Mammary epithelial cell (primary cell): ENCODE measurements at regions of chr11 and their contacts with region 1.

Region 1: GRCh38 chr11:64846998-64847666 is 2.7 kb upstream of the CDC42BPG start:
- DNase-seq: peak; percentile 79
- H3K4me3 ChIP-seq: no peak overlapping the region
- H3K27ac ChIP-seq: no peak overlapping the region
- H3K4me1 ChIP-seq: peaks cover 50% of the 10 kb centered on the region
- H3K27me3 ChIP-seq: no peaks in the 10 kb centered on the region
- CTCF ChIP-seq: peak; percentile 73 to 95

Region 2: DNA sequence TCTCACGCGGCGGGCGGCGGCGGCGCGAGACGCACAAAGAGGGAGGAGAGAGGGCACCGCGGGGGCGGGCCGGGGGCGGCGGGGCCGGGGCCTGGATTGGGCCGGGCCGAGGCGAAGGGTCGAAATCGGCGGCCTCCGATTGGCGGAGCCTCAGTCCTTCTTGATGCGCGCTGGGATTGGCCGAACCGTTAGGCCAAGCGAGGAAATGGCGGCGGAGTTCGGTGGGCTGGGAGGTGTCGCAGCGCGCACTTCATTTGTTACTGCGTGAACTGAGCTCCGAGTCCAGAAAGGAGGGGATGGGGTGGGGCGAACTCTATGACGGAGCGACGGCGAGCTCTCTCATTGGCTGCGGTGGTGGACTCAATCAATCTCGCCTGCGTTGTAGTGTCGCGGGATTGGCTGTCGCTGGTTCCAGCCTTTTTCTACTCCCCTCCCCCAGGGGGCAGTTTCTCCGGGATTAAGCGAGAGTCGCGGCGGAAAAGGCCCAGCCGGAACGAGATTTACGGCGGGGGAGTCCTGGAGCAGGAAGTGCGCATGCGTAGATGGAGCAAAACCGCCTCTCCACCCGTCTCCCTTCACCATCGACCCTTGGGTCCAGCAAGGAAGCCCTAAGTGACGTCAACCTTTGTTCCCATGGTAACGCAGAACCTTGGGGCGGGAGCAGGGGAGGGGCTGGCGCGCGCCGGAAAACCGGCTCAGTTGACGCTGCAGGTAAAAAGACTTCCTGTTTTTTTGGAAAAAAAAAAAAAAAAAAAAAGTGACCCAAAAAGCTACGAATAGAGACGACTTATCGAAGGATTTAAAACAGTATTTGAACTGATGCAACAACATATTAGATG is 68.4 kb before region 1 on chr11 and contains the start of gene SF1:
- CTCF ChIA-PET with region 1: interaction called, 5 read pairs
- dilution Hi-C with region 1: no loop called
- in situ Hi-C with region 1: no loop called
- intact Hi-C with region 1: loop called (anchors 2 kb)
- DNase-seq: peak; percentile 100
- H3K4me3 ChIP-seq: peak within 1 kb of the TSS; percentile 84 to 90 (median 86)
- H3K27ac ChIP-seq: peak within 1 kb of the TSS; percentile 96
- H3K4me1 ChIP-seq: peaks cover 22% of the 10 kb centered on the region
- H3K27me3 ChIP-seq: no peaks in the 10 kb centered on the region
- CTCF ChIP-seq: no peak
- total RNA-seq, gene SF1: 115 to 294 TPM

Region 3: GRCh38 chr11:64810271-64810890 is 36.8 kb before region 1 on chr11 and contains the start of gene MEN1:
- CTCF ChIA-PET with region 1: no interaction called
- dilution Hi-C with region 1: no loop called
- in situ Hi-C with region 1: no loop called
- intact Hi-C with region 1: loop called (anchors 2 kb)
- DNase-seq: peak; percentile 94
- H3K4me3 ChIP-seq: peak within 1 kb of the TSS; percentile 85 to 99 (median 89)
- H3K27ac ChIP-seq: peak within 1 kb of the TSS; percentile 31
- H3K4me1 ChIP-seq: peaks cover 6% of the 10 kb centered on the region
- H3K27me3 ChIP-seq: no peaks in the 10 kb centered on the region
- CTCF ChIP-seq: no peak
- total RNA-seq, gene MEN1: 20.7 to 35.7 TPM

Region 4: GRCh38 chr11:64887757-64888405 is 40.7 kb after region 1 on chr11:
- CTCF ChIA-PET with region 1: interaction called, 3 read pairs
- dilution Hi-C with region 1: loop called (anchors 5 kb)
- in situ Hi-C with region 1: loop called (anchors 5 kb)
- intact Hi-C with region 1: loop called (anchors 1 kb)
- DNase-seq: peak; percentile 49
- H3K4me3 ChIP-seq: peak overlapping the region in 1 of 3 experiments; percentile 19
- H3K27ac ChIP-seq: no peak overlapping the region
- H3K4me1 ChIP-seq: peaks cover 8% of the 10 kb centered on the region
- H3K27me3 ChIP-seq: no peaks in the 10 kb centered on the region
- CTCF ChIP-seq: peak; percentile 61 to 94

Region 5: GRCh38 chr11:64935359-64936081 is 88.4 kb after region 1 on chr11 and contains the start of gene GPHA2:
- CTCF ChIA-PET with region 1: no interaction called
- dilution Hi-C with region 1: loop called (anchors 5 kb)
- in situ Hi-C with region 1: no loop called
- intact Hi-C with region 1: no loop called
- DNase-seq: no peak
- H3K4me3 ChIP-seq: no peak within 1 kb of the TSS
- H3K27ac ChIP-seq: no peak within 1 kb of the TSS
- H3K4me1 ChIP-seq: no peaks in the 10 kb centered on the region
- H3K27me3 ChIP-seq: no peaks in the 10 kb centered on the region
- CTCF ChIP-seq: no peak
- total RNA-seq, gene GPHA2: not detected

Region 6: DNA sequence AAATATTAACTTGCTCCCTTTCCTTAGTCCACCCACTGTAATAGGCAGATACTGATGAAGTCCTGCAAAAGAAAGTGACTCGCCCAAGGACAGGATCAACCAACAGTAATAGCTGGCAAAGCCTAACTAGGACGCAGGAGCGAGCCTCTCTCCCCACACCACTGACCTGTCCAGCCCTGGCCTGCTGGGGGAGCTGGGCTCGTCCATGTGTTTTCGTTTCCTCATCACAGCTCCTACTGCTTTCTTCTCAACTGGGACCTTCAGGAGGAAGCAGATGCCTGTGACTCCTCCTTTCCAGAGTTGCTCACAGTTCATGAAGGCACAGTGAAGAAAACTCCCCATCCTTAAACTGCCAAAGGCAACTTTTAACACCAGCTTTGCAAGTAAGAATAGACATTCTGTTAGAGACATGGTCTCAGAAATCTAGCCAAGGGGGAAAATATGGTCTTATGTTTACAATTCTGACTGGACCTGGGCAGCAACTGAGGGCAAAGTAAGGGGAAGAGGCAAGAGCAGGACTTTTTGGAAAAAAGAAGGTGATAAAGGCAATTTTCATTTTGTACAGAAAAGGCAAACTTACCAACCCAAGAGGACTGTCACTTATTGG is 100.2 kb after region 1 on chr11:
- CTCF ChIA-PET with region 1: no interaction called
- dilution Hi-C with region 1: no loop called
- in situ Hi-C with region 1: no loop called
- intact Hi-C with region 1: no loop called
- DNase-seq: no peak
- H3K4me3 ChIP-seq: no peak overlapping the region
- H3K27ac ChIP-seq: no peak overlapping the region
- H3K4me1 ChIP-seq: no peaks in the 10 kb centered on the region
- H3K27me3 ChIP-seq: no peaks in the 10 kb centered on the region
- CTCF ChIP-seq: no peak

Region 7: DNA sequence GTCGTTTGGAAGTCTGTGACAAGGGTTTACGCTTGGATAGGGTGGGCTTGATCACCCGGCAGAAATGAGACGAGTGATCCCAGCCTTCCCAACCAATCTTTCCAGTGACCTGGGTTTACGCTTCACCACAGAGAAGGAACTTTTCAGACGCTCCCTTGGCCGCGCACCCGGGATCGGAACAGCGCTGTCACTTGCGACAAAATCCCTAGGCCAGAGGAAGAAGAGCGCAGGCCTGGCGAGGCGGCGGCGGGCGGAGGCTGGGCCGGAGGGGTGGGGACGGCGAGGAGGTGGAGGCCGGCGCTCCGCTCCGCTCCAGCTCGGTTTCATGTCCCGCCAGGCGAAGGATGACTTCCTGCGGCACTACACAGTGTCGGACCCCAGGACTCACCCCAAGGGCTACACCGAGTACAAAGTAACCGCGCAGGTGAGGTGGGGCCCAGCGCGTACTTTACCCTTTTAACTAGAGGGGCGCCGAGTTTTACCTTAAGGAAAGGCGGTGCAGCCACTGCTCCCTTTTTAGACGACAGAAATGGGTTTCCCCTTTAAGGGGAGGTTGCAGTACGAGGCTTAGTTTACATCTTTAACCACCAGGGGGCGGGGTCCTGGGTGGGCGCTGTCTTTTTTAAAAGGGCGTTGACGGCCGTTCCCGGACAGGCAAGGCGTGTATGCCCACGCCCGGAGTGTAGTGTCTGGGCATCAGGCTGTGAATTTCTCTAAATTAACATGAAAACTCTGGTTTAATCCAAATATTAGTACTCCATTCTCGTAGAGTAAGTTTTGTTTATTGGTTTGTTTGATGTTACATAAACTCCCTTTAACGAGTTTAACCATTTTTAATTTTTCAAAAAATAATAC is 180.3 kb after region 1 on chr11 and contains the start of gene SNX15:
- CTCF ChIA-PET with region 1: no interaction called
- dilution Hi-C with region 1: no loop called
- in situ Hi-C with region 1: no loop called
- intact Hi-C with region 1: loop called (anchors 5 kb)
- DNase-seq: peak; percentile 96
- H3K4me3 ChIP-seq: peak within 1 kb of the TSS; percentile 54 to 80 (median 72)
- H3K27ac ChIP-seq: peak within 1 kb of the TSS; percentile 41
- H3K4me1 ChIP-seq: peaks cover 11% of the 10 kb centered on the region
- H3K27me3 ChIP-seq: no peaks in the 10 kb centered on the region
- CTCF ChIP-seq: peak; percentile 34 to 66
- total RNA-seq, gene SNX15: 12.3 to 19.7 TPM

Region 8: DNA sequence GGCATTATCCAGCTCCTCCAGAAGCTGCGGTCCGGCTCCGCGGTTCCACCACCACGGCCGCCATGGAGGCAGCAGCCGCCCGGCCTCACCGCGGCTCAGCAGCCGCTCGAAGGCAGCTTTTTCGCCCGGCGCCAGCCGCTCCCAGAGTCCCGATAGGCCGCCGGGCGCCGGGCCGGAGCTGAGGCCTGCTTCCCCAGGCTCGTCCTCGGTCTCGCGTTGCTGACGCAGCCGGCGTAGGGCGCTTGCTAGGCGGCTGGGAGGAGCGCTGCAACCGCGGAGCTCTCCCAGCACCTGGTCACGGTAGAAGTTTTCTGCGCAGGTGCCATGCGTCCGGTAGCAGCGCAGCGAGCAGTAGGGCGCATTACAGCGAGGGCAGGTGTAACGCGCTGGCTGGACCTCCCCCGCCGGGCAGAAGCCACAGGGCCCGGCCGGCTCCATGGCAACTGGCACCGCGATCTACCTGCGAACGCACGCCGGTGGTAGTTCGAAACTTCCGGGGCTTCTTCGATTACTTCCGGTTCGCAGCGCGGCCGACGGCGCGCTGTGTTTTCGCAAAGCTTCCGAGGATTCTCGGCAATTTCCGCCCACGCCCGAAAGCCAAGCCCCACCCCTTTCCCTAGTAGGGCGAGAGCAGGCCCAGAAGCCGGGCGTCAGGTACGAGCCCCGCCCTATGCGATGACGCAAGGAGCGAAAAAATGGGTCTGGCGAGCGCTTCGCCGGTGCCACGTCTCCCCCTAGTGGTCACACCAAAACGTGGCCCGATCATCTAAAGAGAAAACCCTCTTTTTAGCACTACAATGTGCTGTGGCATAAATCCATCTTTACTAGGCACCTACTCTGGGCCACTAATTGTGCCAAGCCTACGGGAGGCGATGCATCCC is 270.3 kb after region 1 on chr11 and contains the start of gene ZNHIT2:
- CTCF ChIA-PET with region 1: no interaction called
- dilution Hi-C with region 1: no loop called
- in situ Hi-C with region 1: no loop called
- intact Hi-C with region 1: loop called (anchors 1 kb)
- DNase-seq: peak; percentile 98
- H3K4me3 ChIP-seq: peak within 1 kb of the TSS; percentile 74 to 82 (median 81)
- H3K27ac ChIP-seq: peak within 1 kb of the TSS; percentile 74
- H3K4me1 ChIP-seq: peaks cover 33% of the 10 kb centered on the region
- H3K27me3 ChIP-seq: no peaks in the 10 kb centered on the region
- CTCF ChIP-seq: peak; percentile 84 to 95
- total RNA-seq, gene ZNHIT2: 13.6 to 15.2 TPM